ENCODE measurements at regions of chr7 and their contacts with region 1.

Region 1: GRCh38 chr7:123865517-123866117 is 20.6 kb downstream of the HYAL4 start:
- DNase-seq: peak in 3 of 6 donors; percentile 32 to 64 (median 44)
- ATAC-seq: peak; percentile 89 to 97 (median 95)
- H3K4me3 ChIP-seq: no peak overlapping the region
- H3K27ac ChIP-seq: no peak overlapping the region
- H3K4me1 ChIP-seq: peaks cover 0 to 6% (median 0%) of the 10 kb centered on the region in 3 donors
- H3K27me3 ChIP-seq: no peaks in the 10 kb centered on the region
- CTCF ChIP-seq: peak; percentile 49 to 78 (median 60)

Region 2: DNA sequence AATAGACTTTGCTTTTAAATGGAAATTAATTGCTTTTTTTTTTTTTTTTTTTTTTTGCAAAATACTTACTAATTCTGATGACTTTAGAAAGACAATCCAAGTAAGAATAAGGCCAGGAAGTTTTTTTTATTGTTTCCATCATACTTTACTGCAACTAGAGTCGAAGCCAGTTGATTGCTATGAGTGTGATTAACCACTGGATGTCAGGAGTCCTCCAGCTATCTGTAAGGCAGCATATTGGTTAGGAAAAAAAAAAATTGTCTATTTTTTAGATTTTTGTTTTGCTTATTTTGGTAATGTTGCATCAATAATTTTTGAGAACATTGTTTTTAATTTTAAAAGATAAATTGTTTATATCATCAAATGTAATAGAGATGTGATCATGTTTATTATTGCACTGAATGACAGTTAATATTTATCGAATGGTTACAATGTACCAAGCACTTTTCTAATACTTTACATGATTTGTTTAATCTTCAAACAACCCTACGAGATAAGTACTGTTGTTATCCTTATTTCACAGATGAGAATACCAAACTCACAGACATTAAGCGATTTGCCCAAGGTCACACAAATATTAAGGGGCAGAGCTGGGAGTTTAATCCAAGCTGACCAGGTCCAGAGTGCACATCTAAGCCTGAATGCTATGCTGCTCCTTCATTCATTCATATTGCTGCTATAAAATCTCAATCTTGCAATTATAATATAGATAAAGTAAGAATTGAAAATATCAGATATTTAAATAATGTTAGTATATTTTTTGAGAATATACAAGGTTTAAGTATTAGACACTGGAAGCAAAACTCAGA is 229.9 kb before region 1 on chr7:
- intact Hi-C with region 1: loop called in 1 of 3 experiments (anchors 10 kb)
- DNase-seq: no peak
- ATAC-seq: peak in 3 of 4 donors; percentile 71 to 79 (median 77)
- H3K4me3 ChIP-seq: no peak overlapping the region
- H3K27ac ChIP-seq: no peak overlapping the region
- H3K4me1 ChIP-seq: no peaks in the 10 kb centered on the region
- H3K27me3 ChIP-seq: no peaks in the 10 kb centered on the region
- CTCF ChIP-seq: peak in 3 of 4 donors; percentile 11 to 33 (median 22)

Region 3: GRCh38 chr7:123674399-123675180 is 191.0 kb before region 1 on chr7:
- intact Hi-C with region 1: loop called in 1 of 3 experiments (anchors 10 kb)
- DNase-seq: no peak
- ATAC-seq: peak in 1 of 4 donors; percentile 16
- H3K4me3 ChIP-seq: no peak overlapping the region
- H3K27ac ChIP-seq: no peak overlapping the region
- H3K4me1 ChIP-seq: peaks cover 4 to 8% (median 6%) of the 10 kb centered on the region in 3 donors
- H3K27me3 ChIP-seq: no peaks in the 10 kb centered on the region
- CTCF ChIP-seq: no peak

Region 4: DNA sequence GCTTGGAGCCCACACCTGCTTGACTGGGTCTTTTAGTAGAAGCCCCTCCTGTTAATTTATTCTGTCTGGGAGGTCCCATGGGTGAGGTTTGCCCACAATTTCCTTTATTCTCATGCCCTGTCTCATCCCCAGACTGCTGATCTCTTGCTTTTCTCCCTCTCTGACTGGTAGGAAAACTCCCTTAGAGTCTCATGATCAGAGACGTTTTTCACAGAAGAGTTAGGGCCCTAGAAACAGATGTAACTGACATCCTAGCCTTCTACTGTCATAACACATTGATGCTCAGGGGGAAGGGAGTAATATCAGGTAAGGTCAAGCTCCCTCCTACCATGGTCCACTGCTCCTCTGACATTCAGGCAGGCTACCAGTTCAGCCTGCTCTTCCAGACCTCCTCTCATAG is 73.1 kb before region 1 on chr7:
- intact Hi-C with region 1: loop called in 2 of 3 experiments (anchors 5 to 10 kb)
- DNase-seq: no peak
- ATAC-seq: no peak
- H3K4me3 ChIP-seq: no peak overlapping the region
- H3K27ac ChIP-seq: no peak overlapping the region
- H3K4me1 ChIP-seq: peaks cover 4 to 6% (median 6%) of the 10 kb centered on the region in 3 donors
- H3K27me3 ChIP-seq: no peaks in the 10 kb centered on the region
- CTCF ChIP-seq: no peak

Region 5: GRCh38 chr7:123797673-123798527 is 67.7 kb before region 1 on chr7:
- intact Hi-C with region 1: loop called in 2 of 3 experiments (anchors 5 to 10 kb)
- DNase-seq: peak in 3 of 6 donors; percentile 26 to 38 (median 27)
- ATAC-seq: peak; percentile 96 to 99 (median 98)
- H3K4me3 ChIP-seq: no peak overlapping the region
- H3K27ac ChIP-seq: peak overlapping the region in 3 of 4 donors; percentile 13 to 55 (median 36)
- H3K4me1 ChIP-seq: peaks cover 7 to 12% (median 9%) of the 10 kb centered on the region in 3 donors
- H3K27me3 ChIP-seq: no peaks in the 10 kb centered on the region
- CTCF ChIP-seq: peak; percentile 9 to 47 (median 25)

Region 6: DNA sequence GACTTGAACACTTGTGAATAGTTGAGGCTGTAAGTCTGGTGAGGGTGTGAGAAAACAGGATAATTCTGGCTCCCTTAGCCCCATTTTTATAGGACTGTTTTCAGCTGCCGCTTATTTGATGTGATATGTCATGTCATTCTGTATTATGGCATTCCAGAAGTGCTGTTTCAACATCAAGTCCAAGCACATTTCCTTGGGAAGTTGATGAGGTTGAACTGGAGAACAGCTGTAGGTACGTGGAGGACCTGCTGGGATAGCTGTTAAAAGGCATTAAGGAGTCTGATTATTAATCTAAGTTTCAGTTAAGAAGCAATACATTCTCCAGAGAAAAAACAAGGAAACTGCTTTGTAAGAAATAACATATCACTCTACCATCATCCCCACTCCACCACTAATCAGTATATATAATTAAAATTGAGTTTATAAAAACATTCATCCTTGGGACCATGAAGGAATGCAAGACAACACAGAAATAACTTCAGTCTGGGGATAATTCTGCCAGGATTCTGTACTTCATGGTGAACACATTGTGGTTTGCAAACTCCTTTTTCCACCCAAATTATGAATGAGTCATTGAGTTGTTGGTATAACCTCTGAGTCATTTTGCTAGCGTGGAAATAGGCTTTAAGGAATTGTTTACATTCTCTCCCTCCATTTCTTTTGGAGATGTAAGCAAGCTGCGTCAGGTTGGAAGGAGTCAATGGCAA is 207.1 kb after region 1 on chr7:
- intact Hi-C with region 1: no loop called
- DNase-seq: no peak
- ATAC-seq: no peak
- H3K4me3 ChIP-seq: no peak overlapping the region
- H3K27ac ChIP-seq: no peak overlapping the region
- H3K4me1 ChIP-seq: no peaks in the 10 kb centered on the region
- H3K27me3 ChIP-seq: no peaks in the 10 kb centered on the region
- CTCF ChIP-seq: no peak